Natural killer cell (primary cell): ENCODE measurements at regions of chr4 and their contacts with region 1.

Region 1: GRCh38 chr4:177441803-177442622 is at the start of gene AGA:
- DNase-seq: peak; percentile 94 to 98
- ATAC-seq: peak; percentile 90 to 95 (median 90)
- H3K4me3 ChIP-seq: peak within 1 kb of the TSS; percentile 69
- H3K4me3 Mint-ChIP-seq: peak within 1 kb of the TSS; percentile 90
- H3K27ac ChIP-seq: peak within 1 kb of the TSS; percentile 86
- H3K27ac Mint-ChIP-seq: peak within 1 kb of the TSS; percentile 85 to 94
- H3K4me1 ChIP-seq: peaks cover 12% of the 10 kb centered on the region
- H3K4me1 Mint-ChIP-seq: peaks cover 20 to 24% of the 10 kb centered on the region in 2 donors
- H3K27me3 ChIP-seq: no peaks in the 10 kb centered on the region
- H3K27me3 Mint-ChIP-seq: no peaks in the 10 kb centered on the region
- CTCF ChIP-seq: no peak
- total RNA-seq, gene AGA: 15.7 to 16.9 (median 16.6) TPM

Region 2: GRCh38 chr4:176319704-176320339 is 1122.2 kb before region 1 on chr4 and contains the start of gene SPCS3:
- intact Hi-C with region 1: loop called (anchors 5 kb)
- DNase-seq: peak; percentile 94 to 98
- ATAC-seq: peak; percentile 86 to 95 (median 86)
- H3K4me3 ChIP-seq: peak within 1 kb of the TSS; percentile 81
- H3K4me3 Mint-ChIP-seq: peak within 1 kb of the TSS; percentile 96
- H3K27ac ChIP-seq: peak within 1 kb of the TSS; percentile 95
- H3K27ac Mint-ChIP-seq: peak within 1 kb of the TSS; percentile 94 to 98
- H3K4me1 ChIP-seq: peaks cover 10% of the 10 kb centered on the region
- H3K4me1 Mint-ChIP-seq: peaks cover 50 to 51% of the 10 kb centered on the region in 2 donors
- H3K27me3 ChIP-seq: no peaks in the 10 kb centered on the region
- H3K27me3 Mint-ChIP-seq: no peaks in the 10 kb centered on the region
- CTCF ChIP-seq: no peak
- total RNA-seq, gene SPCS3: 157 to 204 (median 171) TPM

Region 3: GRCh38 chr4:177309522-177310371 is 132.3 kb before region 1 on chr4 and contains the start of gene NEIL3:
- intact Hi-C with region 1: loop called (anchors 1 kb)
- DNase-seq: peak; percentile 82 to 97
- ATAC-seq: peak; percentile 93 to 95 (median 94)
- H3K4me3 ChIP-seq: peak within 1 kb of the TSS; percentile 58
- H3K4me3 Mint-ChIP-seq: peak within 1 kb of the TSS; percentile 95
- H3K27ac ChIP-seq: no peak within 1 kb of the TSS
- H3K27ac Mint-ChIP-seq: peak within 1 kb of the TSS; percentile 19 to 85
- H3K4me1 ChIP-seq: peaks cover 3% of the 10 kb centered on the region
- H3K4me1 Mint-ChIP-seq: peaks cover 9 to 15% of the 10 kb centered on the region in 2 donors
- H3K27me3 ChIP-seq: no peaks in the 10 kb centered on the region
- H3K27me3 Mint-ChIP-seq: no peaks in the 10 kb centered on the region
- CTCF ChIP-seq: no peak
- total RNA-seq, gene NEIL3: 0.45 to 1.9 (median 1.2) TPM

Region 4: DNA sequence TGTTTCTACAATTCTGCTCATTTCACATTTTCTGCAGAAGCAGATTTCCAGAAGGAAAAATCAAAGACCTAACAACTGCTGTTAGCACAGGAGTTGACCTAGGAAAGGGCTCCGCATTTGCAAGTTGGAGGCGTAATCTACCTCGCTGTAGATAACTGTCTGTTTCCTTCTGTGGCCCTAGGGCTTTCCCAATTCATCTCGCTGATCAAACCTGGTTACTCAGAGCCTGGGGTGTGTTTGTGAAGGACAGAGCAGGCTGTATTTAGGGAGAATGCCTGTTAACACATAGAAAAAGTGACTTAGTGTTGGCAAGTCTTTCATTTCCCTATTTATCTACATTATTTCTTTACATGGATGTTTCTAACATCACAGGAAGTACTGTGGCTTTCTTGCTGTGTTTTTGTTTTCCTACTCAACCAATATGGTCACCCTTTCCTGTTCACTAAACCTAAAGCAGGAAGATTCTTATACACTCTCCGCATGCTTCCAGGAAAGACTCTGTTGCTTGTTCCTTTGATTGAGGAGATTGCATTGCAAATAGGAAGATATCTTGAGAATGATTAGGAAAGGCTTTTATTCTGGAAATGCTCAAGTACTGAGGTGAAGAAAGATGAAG is 40.2 kb before region 1 on chr4:
- intact Hi-C with region 1: loop called (anchors 5 kb)
- DNase-seq: peak in 1 of 2 donors; percentile 28
- ATAC-seq: peak; percentile 48 to 72 (median 63)
- H3K4me3 ChIP-seq: no peak overlapping the region
- H3K4me3 Mint-ChIP-seq: peak overlapping the region; percentile 72
- H3K27ac ChIP-seq: peak overlapping the region; percentile 35
- H3K27ac Mint-ChIP-seq: peak overlapping the region; percentile 67 to 87
- H3K4me1 ChIP-seq: peaks cover 29% of the 10 kb centered on the region
- H3K4me1 Mint-ChIP-seq: peaks cover 30 to 49% of the 10 kb centered on the region in 2 donors
- H3K27me3 ChIP-seq: no peaks in the 10 kb centered on the region
- H3K27me3 Mint-ChIP-seq: no peaks in the 10 kb centered on the region
- CTCF ChIP-seq: no peak